CD8-positive, alpha-beta T cell (primary cell): ENCODE measurements at regions of chr4 and their contacts with region 1.

Region 1: GRCh38 chr4:10461091-10461849 is 4.0 kb upstream of the ZNF518B start:
- DNase-seq: peak; percentile 53 to 92 (median 68)
- ATAC-seq: peak; percentile 82
- H3K4me3 ChIP-seq: peak overlapping the region; percentile 43 to 55
- H3K4me3 Mint-ChIP-seq: peak overlapping the region; percentile 83
- H3K27ac ChIP-seq: no peak overlapping the region
- H3K27ac Mint-ChIP-seq: no peak overlapping the region
- H3K4me1 ChIP-seq: peaks cover 20% of the 10 kb centered on the region
- H3K4me1 Mint-ChIP-seq: peaks cover 28% of the 10 kb centered on the region
- H3K27me3 ChIP-seq: peaks cover 0 to 11% of the 10 kb centered on the region in 2 experiments
- H3K27me3 Mint-ChIP-seq: peaks cover 29% of the 10 kb centered on the region
- CTCF ChIP-seq: peak; percentile 99

Region 2: GRCh38 chr4:10018818-10019461 is 442.3 kb before region 1 on chr4:
- CTCF ChIA-PET with region 1: no interaction called
- POLR2A ChIA-PET with region 1: no interaction called
- intact Hi-C with region 1: loop called (anchors 1 to 5 kb)
- DNase-seq: peak; percentile 74 to 96 (median 93)
- ATAC-seq: peak; percentile 99
- H3K4me3 ChIP-seq: peak overlapping the region; percentile 59 to 60
- H3K4me3 Mint-ChIP-seq: peak overlapping the region; percentile 87
- H3K27ac ChIP-seq: peak overlapping the region; percentile 66 to 76
- H3K27ac Mint-ChIP-seq: peak overlapping the region; percentile 95
- H3K4me1 ChIP-seq: peaks cover 11% of the 10 kb centered on the region
- H3K4me1 Mint-ChIP-seq: peaks cover 12% of the 10 kb centered on the region
- H3K27me3 ChIP-seq: peaks cover 0 to 2% of the 10 kb centered on the region in 2 experiments
- H3K27me3 Mint-ChIP-seq: no peaks in the 10 kb centered on the region
- CTCF ChIP-seq: peak; percentile 96

Region 3: DNA sequence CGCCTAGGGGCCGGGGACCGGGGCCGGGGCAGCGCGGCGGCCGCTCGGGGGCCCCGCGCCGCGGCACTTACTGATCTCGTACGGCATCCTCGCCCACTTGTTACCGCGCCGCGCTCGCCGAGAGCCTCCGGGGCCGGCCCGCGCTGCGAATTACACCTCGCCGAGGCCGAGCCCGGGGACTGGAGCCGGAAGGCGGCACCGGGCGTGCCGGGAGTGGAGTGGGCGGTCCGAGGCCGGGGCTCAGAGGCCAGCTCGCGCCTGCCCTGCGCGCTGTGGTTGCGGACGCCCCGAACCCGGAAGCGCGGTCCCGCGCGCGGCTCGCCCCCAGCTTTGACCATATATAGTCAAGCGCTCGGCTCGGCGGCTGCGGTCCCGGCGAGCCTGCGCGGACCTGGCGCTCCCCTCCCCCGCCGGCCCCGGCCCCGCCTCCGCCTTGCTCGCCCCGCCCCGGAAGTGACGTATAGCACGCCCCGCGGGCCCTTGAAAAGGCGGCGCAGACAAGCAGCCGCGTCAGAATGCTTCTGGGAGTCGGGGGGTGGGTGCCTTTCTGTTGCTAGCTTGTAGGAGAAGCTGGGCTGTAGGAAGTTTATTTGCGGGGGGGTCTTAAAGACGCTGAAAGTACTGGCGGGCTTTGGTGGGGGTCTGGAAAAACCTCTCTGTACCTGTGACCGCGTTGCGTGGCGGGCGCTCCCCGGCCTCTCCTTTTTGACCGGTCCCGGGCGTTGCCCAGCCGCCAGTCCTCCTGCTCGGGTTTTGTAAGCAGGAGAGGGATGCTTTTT is 344.5 kb before region 1 on chr4 and contains the start of gene WDR1:
- CTCF ChIA-PET with region 1: no interaction called
- POLR2A ChIA-PET with region 1: interaction called, 21 read pairs
- intact Hi-C with region 1: loop called (anchors 1 to 2 kb)
- DNase-seq: peak; percentile 82 to 99 (median 94)
- ATAC-seq: peak; percentile 71
- H3K4me3 ChIP-seq: peak within 1 kb of the TSS; percentile 83 to 91
- H3K4me3 Mint-ChIP-seq: peak within 1 kb of the TSS; percentile 95
- H3K27ac ChIP-seq: peak within 1 kb of the TSS; percentile 96 to 98
- H3K27ac Mint-ChIP-seq: peak within 1 kb of the TSS; percentile 99
- H3K4me1 ChIP-seq: peaks cover 63% of the 10 kb centered on the region
- H3K4me1 Mint-ChIP-seq: peaks cover 74% of the 10 kb centered on the region
- H3K27me3 ChIP-seq: no peaks in the 10 kb centered on the region
- H3K27me3 Mint-ChIP-seq: no peaks in the 10 kb centered on the region
- CTCF ChIP-seq: no peak
- total RNA-seq, gene WDR1: 220 to 224 TPM

Region 4: GRCh38 chr4:10413177-10413576 is 48.1 kb before region 1 on chr4:
- CTCF ChIA-PET with region 1: no interaction called
- POLR2A ChIA-PET with region 1: interaction called, 6 read pairs
- intact Hi-C with region 1: loop called (anchors 2 to 5 kb)
- DNase-seq: no peak
- ATAC-seq: no peak
- H3K4me3 ChIP-seq: no peak overlapping the region
- H3K4me3 Mint-ChIP-seq: no peak overlapping the region
- H3K27ac ChIP-seq: no peak overlapping the region
- H3K27ac Mint-ChIP-seq: no peak overlapping the region
- H3K4me1 ChIP-seq: peaks cover 25% of the 10 kb centered on the region
- H3K4me1 Mint-ChIP-seq: peaks cover 42% of the 10 kb centered on the region
- H3K27me3 ChIP-seq: no peaks in the 10 kb centered on the region
- H3K27me3 Mint-ChIP-seq: no peaks in the 10 kb centered on the region
- CTCF ChIP-seq: no peak

Region 5: DNA sequence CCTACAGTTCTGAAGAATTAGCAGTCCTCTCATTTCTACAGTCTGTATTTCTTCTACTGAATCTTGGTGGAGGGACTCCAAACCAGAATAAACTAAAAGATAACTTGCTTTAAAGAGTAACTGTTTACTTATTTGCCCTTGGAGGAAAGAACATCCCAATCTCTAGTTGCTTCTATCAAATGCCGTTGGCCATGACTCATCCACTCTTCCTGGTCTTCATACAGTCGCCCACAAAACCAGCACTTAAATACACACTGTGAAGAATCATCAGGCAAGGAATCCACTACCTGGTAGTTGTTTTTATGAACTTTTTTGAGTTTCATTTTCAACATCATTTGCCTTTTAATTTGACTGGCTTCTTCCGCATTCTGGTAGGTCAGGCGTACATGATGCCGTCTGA is 18.3 kb before region 1 on chr4:
- CTCF ChIA-PET with region 1: interaction called, 11 read pairs
- POLR2A ChIA-PET with region 1: interaction called, 3 read pairs
- intact Hi-C with region 1: no loop called
- DNase-seq: no peak
- ATAC-seq: no peak
- H3K4me3 ChIP-seq: no peak overlapping the region
- H3K4me3 Mint-ChIP-seq: no peak overlapping the region
- H3K27ac ChIP-seq: no peak overlapping the region
- H3K27ac Mint-ChIP-seq: no peak overlapping the region
- H3K4me1 ChIP-seq: no peaks in the 10 kb centered on the region
- H3K4me1 Mint-ChIP-seq: peaks cover 6% of the 10 kb centered on the region
- H3K27me3 ChIP-seq: no peaks in the 10 kb centered on the region
- H3K27me3 Mint-ChIP-seq: no peaks in the 10 kb centered on the region
- CTCF ChIP-seq: no peak

Region 6: DNA sequence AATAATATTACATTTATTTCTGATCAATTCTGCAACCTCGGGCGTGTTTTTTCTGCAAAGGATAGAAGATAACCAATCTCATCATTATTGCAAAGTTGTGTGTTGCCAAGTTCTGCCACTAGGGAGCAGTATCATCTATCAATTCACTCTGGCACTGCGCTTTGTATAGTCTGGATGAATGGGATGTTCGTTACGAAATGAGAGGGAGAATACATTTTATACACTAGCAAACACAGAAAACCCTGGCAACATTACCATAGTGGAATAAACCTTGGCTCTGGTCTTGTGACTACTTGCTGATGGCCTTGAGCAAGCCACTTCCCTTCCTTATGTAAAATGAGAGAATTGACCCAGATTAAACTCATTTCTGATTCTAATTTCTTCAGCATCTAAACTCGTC is 93.4 kb after region 1 on chr4:
- CTCF ChIA-PET with region 1: interaction called, 8 read pairs
- POLR2A ChIA-PET with region 1: no interaction called
- intact Hi-C with region 1: loop called (anchors 1 kb)
- DNase-seq: peak in 8 of 9 experiments; percentile 7 to 59 (median 32)
- ATAC-seq: peak; percentile 51
- H3K4me3 ChIP-seq: no peak overlapping the region
- H3K4me3 Mint-ChIP-seq: no peak overlapping the region
- H3K27ac ChIP-seq: no peak overlapping the region
- H3K27ac Mint-ChIP-seq: no peak overlapping the region
- H3K4me1 ChIP-seq: no peaks in the 10 kb centered on the region
- H3K4me1 Mint-ChIP-seq: peaks cover 2% of the 10 kb centered on the region
- H3K27me3 ChIP-seq: no peaks in the 10 kb centered on the region
- H3K27me3 Mint-ChIP-seq: peaks cover 14% of the 10 kb centered on the region
- CTCF ChIP-seq: peak; percentile 92

Region 7: DNA sequence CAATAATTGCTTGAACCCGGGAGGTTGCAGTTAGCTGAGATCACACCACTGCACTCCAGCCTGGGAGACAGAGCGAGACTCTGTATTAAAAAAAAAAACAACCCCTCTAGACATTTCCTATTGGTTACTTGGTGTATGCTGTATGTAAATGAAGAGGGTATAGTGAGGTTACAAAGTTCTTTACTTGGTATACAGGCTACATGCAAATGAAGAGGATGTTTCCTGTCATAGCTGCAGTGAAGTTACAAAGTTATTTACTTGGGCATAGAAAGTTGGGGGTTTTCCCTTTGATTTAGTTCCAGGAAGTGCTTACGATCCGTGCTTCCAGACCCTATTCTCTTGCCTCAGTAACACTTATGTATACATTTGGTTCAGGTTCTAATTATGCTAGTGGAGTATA is 261.7 kb after region 1 on chr4:
- CTCF ChIA-PET with region 1: no interaction called
- POLR2A ChIA-PET with region 1: no interaction called
- intact Hi-C with region 1: no loop called
- DNase-seq: peak in 1 of 9 experiments; percentile 29
- ATAC-seq: peak; percentile 38
- H3K4me3 ChIP-seq: no peak overlapping the region
- H3K4me3 Mint-ChIP-seq: no peak overlapping the region
- H3K27ac ChIP-seq: no peak overlapping the region
- H3K27ac Mint-ChIP-seq: no peak overlapping the region
- H3K4me1 ChIP-seq: no peaks in the 10 kb centered on the region
- H3K4me1 Mint-ChIP-seq: peaks cover 3% of the 10 kb centered on the region
- H3K27me3 ChIP-seq: no peaks in the 10 kb centered on the region
- H3K27me3 Mint-ChIP-seq: no peaks in the 10 kb centered on the region
- CTCF ChIP-seq: no peak